Posterior vena cava (tissue), 2 donors: ENCODE measurements at regions of chr10 and their contacts with region 1.

Region 1: DNA sequence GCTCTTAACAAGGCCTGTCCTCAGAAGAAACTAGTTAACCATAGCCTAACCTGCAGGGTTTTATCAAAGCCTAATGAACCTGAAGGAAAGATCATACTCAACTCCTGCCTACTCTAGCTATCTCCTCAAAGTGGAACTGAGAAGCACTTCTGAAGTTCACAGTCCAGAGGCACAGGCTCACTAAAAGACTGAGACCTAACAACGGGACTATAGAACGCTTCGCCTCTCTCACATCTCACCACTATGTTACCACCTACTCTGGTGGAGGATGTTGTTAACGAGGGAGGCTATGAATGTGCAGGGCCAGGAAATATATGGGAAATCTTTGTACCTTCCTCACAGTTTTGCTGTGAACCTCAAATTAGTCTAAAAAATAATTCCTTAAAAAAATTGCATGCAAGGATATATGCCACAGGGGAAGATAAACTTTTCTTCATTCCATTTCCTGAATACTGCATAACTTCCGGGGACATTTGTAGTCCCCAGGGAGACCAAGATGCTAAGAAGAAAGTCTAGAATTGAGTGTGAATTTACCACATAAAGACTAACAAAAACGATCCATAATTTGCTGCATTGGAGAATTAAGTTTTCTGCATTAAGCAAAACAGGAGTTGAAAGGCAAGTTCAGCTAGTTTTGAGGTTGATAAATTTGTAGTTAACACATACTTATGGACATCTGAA is 21.6 kb downstream of the LIPJ start:
- DNase-seq: no peak

Region 2: DNA sequence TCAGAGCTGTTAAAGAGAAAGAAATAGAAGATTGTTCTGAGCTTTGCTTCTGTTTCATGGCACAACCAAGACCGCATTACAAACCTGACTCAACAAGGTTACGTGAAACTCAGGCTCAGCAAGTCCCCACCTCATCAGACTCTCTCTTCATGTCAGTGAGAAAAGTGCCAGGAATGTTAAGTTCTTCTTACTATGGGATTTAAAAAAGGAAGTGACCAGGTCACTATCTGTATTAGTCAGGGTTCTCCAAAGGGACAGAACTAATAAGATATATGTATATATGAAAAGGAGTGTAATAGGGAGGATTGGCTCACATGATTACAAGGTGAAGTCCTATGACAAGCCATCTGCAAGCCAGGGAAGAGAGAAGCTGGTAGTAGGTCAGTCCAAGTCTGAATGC is 973.9 kb before region 1 on chr10:
- intact Hi-C with region 1: loop called in 1 of 2 experiments (anchors 5 kb)
- DNase-seq: no peak

Region 3: GRCh38 chr10:88765816-88766215 is 157.6 kb after region 1 on chr10:
- intact Hi-C with region 1: no loop called
- DNase-seq: no peak